Body of pancreas (tissue), 4 donors: ENCODE measurements at regions of chr1 and their contacts with region 1.

Region 1: DNA sequence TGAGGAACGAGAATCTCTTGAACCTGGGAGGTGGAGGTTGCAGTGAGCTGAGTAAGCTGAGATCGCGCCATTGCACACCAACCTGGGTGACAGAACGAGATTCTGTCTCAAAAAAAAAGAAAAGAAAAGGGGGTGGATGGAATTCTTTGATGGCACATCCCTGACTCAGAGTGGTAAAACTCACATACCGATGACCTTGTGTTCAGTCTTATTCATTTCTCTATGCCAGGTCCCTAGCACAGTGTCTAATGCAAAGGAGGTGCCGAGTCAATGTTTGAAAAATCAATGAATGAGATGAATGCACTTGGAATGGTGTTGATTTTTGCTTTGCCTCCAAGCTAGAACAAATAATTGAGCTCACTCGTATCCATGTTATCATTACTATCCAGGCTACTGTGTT is 18.5 kb upstream of the FAM20B start:
- DNase-seq: no peak
- ATAC-seq: no peak
- H3K4me3 ChIP-seq: no peak overlapping the region
- H3K27ac ChIP-seq: no peak overlapping the region
- H3K4me1 ChIP-seq: peaks cover 8% of the 10 kb centered on the region
- H3K27me3 ChIP-seq: no peaks in the 10 kb centered on the region
- CTCF ChIP-seq: no peak
- POLR2A ChIP-seq: no peak

Region 2: GRCh38 chr1:178536844-178537371 is 470.3 kb before region 1 on chr1:
- intact Hi-C with region 1: loop called (anchors 5 kb)
- DNase-seq: peak; percentile 64 to 82 (median 76)
- ATAC-seq: peak; percentile 84
- H3K4me3 ChIP-seq: no peak overlapping the region
- H3K27ac ChIP-seq: peak overlapping the region; percentile 27 to 67 (median 53)
- H3K4me1 ChIP-seq: peaks cover 33% of the 10 kb centered on the region
- H3K27me3 ChIP-seq: no peaks in the 10 kb centered on the region
- CTCF ChIP-seq: no peak
- POLR2A ChIP-seq: peak in 1 of 3 donors; percentile 25

Region 3: DNA sequence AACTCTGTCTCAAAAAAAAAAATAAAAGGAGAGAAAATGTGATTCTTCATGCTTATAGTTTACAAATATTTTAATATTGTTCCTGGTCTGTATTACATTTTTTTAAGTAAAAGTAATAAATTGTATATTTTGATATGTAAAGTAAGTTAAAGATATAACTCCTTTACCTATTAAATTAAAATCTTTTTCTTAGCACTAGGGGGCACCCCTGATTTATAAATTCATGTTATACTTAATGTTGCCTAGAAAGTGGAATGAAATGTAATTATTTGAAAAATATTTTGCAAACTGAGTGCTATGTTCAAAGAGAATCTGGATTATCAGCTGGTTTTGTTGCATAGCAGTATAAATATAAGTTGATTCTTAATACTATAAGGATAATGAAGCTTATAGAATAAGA is 233.0 kb before region 1 on chr1:
- intact Hi-C with region 1: loop called (anchors 5 kb)
- DNase-seq: no peak
- ATAC-seq: no peak
- H3K4me3 ChIP-seq: no peak overlapping the region
- H3K27ac ChIP-seq: no peak overlapping the region
- H3K4me1 ChIP-seq: no peaks in the 10 kb centered on the region
- H3K27me3 ChIP-seq: no peaks in the 10 kb centered on the region
- CTCF ChIP-seq: peak; percentile 15 to 48 (median 33)
- POLR2A ChIP-seq: no peak

Region 4: DNA sequence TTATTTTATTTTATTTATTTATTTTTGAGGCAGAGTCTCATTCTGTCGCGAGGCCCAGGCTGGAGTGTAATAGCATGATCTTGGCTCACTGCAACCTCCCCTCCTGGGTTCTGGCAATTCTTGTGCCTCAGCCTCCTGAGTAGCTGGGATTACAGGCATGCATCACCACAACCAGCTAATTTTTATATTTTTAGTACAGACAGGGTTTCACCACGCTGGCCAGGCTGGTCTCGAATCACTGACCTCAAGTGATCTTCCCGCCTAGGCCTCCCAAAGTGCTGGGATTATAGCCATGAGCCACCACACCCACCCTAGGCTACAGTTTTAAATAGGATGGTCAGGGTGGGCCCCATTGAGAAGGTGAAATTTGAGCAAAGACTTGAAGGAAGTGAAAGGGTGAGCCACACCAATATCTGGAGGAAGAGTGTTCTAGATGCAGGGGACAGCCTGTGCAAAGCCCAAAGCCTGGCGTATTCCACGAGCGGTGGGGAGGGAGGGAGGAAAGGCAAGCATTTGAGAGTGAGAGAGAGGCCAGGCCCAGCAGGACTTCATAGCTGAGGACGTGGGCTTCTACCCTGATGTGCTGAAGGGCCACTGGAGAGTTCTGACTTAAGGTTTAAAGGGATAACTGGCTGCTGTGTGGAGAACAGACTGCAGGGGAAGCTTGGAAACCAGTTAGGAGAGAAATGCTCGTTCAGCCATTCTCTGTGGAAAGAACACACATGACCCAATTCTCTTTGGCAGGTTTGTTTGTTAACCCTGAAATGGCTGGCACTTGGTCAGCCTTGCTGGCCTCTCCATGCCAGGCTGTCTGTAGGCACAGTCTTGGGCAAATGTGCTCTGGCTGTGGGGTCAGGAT is 44.2 kb before region 1 on chr1:
- intact Hi-C with region 1: no loop called
- DNase-seq: no peak
- ATAC-seq: no peak
- H3K4me3 ChIP-seq: no peak overlapping the region
- H3K27ac ChIP-seq: no peak overlapping the region
- H3K4me1 ChIP-seq: no peaks in the 10 kb centered on the region
- H3K27me3 ChIP-seq: no peaks in the 10 kb centered on the region
- CTCF ChIP-seq: no peak
- POLR2A ChIP-seq: no peak